A549 (cell line): ENCODE measurements at regions of chr9 and their contacts with region 1.

Region 1: GRCh38 chr9:120755827-120756434 is 37.3 kb downstream of the FBXW2 start:
- DNase-seq: peak; percentile 47 to 68
- ATAC-seq: peak; percentile 83 to 87; a peak in 5 of 6 replicates
- H3K4me3 ChIP-seq: no peak overlapping the region
- H3K27ac ChIP-seq: 0 out of 6 replicates have a peak overlapping the region, but pooled peaks of 1 of the 2 experiments have one; percentile 46
- H3K4me1 ChIP-seq: peaks cover 3% of the 10 kb centered on the region; the same call in 1 of the 3 replicates
- CTCF ChIP-seq: peak; percentile 93
- EP300 ChIP-seq: no peak
- POLR2A ChIP-seq: no peak
- RAD21 ChIP-seq: peak; percentile 92 to 96

Region 2: DNA sequence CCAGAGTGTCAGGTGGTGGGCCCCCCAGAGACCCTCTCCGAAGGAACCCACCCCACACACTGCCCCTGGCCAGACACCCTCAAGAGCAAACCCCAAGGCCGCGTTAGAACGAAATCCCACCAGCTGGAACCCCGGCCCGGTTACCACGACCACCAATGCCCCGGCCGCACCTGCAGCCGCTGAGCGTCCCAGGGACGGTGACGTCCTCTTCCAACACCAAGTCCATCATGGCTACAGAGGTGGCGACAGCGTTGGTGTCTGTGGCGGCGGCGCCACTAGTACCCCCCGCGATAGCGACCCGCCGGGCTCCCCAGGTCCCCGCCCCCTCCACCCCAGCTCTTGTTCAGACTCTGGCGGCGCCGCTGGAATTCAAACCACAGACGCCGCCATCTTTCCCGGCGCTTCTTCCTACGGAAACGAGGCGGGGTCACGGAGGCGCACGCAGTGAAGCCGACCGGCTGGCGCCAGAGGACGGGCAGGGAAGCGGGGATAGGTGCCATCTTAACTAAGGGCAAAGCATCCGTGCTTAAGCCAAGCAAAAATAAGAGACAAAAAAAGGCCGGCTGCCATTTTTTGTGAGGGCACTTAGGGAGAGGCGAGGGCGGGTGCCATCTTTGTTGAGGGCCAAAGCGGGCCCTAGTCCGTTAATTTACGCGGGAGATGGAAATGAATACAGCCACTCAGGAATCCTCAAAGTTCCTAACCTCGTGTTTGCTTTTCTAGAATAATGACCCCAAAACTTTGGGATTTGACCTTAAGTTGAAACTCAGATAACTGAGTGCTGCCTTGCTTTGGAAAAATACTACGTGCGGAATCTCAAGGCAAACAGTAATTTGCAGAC is 176.0 kb before region 1 on chr9 and contains the start of gene CDK5RAP2:
- CTCF ChIA-PET with region 1: no interaction called
- POLR2A ChIA-PET with region 1: no interaction called
- DNase-seq: peak; percentile 91 to 98
- ATAC-seq: peak; percentile 99
- H3K4me3 ChIP-seq: peak within 1 kb of the TSS; percentile 82
- H3K27ac ChIP-seq: peak within 1 kb of the TSS; percentile 87 to 94
- H3K4me1 ChIP-seq: peaks cover 18% of the 10 kb centered on the region
- CTCF ChIP-seq: no peak
- EP300 ChIP-seq: no peak
- POLR2A ChIP-seq: no peak
- RAD21 ChIP-seq: no peak
- polyA plus RNA-seq, gene CDK5RAP2: 37.1 and 44.6 TPM in 2 replicates

Region 3: DNA sequence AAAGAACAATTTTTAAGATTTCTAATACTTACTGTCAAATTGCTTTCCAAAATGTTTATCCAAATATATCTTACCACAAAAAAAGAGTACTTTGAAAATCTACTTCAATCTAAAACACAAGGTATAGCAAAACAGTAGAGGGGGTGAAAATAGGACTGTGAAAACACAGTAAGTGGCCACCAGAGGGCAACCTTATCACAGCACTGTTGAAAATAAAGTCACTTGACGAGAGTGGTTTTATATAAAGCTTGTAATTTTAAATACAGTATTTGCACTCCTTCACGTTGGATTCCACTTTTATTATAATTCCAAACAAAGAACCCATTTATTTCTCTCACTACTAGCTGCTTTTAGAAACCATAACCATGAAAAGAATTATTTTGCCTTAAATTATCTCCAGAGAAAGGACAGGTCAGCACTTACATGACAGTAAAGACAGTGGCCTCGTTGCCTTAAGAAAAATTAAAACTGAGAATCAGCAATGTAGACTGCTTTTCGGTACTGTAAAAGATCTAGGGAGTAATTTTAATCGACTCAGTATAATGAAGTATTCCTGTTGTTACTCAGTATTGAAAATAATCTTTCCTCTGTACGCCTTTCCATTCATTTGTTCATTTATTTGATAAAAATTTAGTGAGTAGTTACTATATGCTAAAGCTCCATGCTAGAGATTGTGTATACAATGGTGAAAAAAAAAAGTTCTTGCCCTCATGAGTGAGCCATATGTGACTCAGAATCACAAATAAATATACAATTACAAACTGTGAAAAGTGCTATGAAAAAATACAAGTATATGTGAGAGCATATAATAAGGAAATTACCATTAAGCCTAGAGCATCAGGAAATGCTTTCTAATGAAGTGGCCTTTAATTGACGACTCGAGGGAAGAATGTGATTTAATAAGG is 135.9 kb before region 1 on chr9:
- CTCF ChIA-PET with region 1: interaction called, 12 read pairs
- POLR2A ChIA-PET with region 1: no interaction called
- DNase-seq: peak; percentile 76 to 77
- ATAC-seq: peak; percentile 91 to 95
- H3K4me3 ChIP-seq: no peak overlapping the region
- H3K27ac ChIP-seq: peak overlapping the region; percentile 62 to 67
- H3K4me1 ChIP-seq: peaks cover 80% of the 10 kb centered on the region
- CTCF ChIP-seq: peak; percentile 96
- EP300 ChIP-seq: no peak
- POLR2A ChIP-seq: no peak
- RAD21 ChIP-seq: peak; percentile 95 to 96

Region 4: GRCh38 chr9:120663380-120663779 is 92.6 kb before region 1 on chr9:
- CTCF ChIA-PET with region 1: no interaction called
- POLR2A ChIA-PET with region 1: no interaction called
- DNase-seq: no peak
- ATAC-seq: peak in 1 of 2 experiments; percentile 28; a peak in 2 of 6 replicates
- H3K4me3 ChIP-seq: no peak overlapping the region
- H3K27ac ChIP-seq: peak overlapping the region; percentile 42 to 53; a peak in 4 of 6 replicates
- H3K4me1 ChIP-seq: peaks cover 62% of the 10 kb centered on the region
- CTCF ChIP-seq: no peak
- EP300 ChIP-seq: no peak
- POLR2A ChIP-seq: no peak
- RAD21 ChIP-seq: no peak

Region 5: GRCh38 chr9:120730661-120731514 is 25.0 kb before region 1 on chr9:
- CTCF ChIA-PET with region 1: interaction called, 20 read pairs
- POLR2A ChIA-PET with region 1: no interaction called
- DNase-seq: no peak
- ATAC-seq: peak; percentile 30 to 35; a peak in 3 of 6 replicates
- H3K4me3 ChIP-seq: no peak overlapping the region
- H3K27ac ChIP-seq: peak overlapping the region; percentile 5 to 11; a peak in 2 of 6 replicates
- H3K4me1 ChIP-seq: peaks cover 23% of the 10 kb centered on the region
- CTCF ChIP-seq: no peak
- EP300 ChIP-seq: no peak
- POLR2A ChIP-seq: no peak
- RAD21 ChIP-seq: no peak

Region 6: GRCh38 chr9:120774722-120775121 is 18.8 kb after region 1 on chr9:
- CTCF ChIA-PET with region 1: interaction called, 96 read pairs
- POLR2A ChIA-PET with region 1: no interaction called
- DNase-seq: peak; percentile 17 to 22
- ATAC-seq: peak; percentile 73 to 79; a peak in 5 of 6 replicates
- H3K4me3 ChIP-seq: no peak overlapping the region
- H3K27ac ChIP-seq: no peak overlapping the region
- H3K4me1 ChIP-seq: peaks cover 31% of the 10 kb centered on the region
- CTCF ChIP-seq: no peak
- EP300 ChIP-seq: no peak
- POLR2A ChIP-seq: no peak
- RAD21 ChIP-seq: no peak

Region 7: DNA sequence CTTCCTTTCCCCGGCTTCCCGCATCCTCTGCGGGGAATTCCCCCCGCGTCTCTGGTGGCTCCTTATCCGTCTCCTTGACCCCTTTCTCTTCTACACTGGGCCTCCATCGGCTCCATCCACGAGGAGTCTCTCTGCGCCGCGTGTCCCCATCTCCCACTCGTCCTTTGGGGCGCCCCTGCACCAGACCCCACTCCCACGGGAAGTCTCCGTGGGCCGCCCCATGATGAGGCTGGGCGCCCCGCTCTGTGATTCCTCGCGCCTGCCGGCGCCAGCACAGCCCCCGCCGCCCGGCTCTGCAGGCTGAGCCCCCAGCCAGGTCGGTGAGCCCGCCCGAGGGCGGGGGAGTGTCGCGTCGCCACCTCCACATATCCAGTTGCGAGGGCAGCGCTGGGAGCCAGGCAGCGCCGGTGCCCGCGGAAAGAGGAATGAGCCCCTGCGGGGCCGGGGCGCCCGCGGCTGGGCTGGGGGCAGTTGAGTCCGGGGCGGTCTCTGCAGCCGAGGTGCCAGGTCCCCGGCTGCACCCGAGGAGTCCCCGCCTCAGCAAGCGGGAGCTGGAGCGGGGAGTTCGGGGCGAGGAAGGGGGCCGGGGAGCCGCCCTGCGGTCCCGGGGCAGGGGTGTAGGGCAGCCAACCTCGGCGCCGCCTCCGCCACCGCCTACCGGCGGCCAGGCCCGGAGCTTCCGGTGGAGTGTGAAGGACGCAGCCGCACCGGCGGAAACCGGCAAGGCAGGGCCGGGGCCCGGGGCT is 172.7 kb after region 1 on chr9:
- CTCF ChIA-PET with region 1: interaction called, 60 read pairs
- POLR2A ChIA-PET with region 1: no interaction called
- DNase-seq: peak; percentile 57 to 78
- ATAC-seq: peak; percentile 85 to 93
- H3K4me3 ChIP-seq: peak overlapping the region; percentile 77
- H3K27ac ChIP-seq: peak overlapping the region; percentile 89 to 97
- H3K4me1 ChIP-seq: peaks cover 26% of the 10 kb centered on the region
- CTCF ChIP-seq: no peak
- EP300 ChIP-seq: no peak
- POLR2A ChIP-seq: peak; percentile 73
- RAD21 ChIP-seq: 0 out of 5 replicates have a peak, but pooled peaks of 1 of the 2 experiments have one; percentile 10

Region 8: DNA sequence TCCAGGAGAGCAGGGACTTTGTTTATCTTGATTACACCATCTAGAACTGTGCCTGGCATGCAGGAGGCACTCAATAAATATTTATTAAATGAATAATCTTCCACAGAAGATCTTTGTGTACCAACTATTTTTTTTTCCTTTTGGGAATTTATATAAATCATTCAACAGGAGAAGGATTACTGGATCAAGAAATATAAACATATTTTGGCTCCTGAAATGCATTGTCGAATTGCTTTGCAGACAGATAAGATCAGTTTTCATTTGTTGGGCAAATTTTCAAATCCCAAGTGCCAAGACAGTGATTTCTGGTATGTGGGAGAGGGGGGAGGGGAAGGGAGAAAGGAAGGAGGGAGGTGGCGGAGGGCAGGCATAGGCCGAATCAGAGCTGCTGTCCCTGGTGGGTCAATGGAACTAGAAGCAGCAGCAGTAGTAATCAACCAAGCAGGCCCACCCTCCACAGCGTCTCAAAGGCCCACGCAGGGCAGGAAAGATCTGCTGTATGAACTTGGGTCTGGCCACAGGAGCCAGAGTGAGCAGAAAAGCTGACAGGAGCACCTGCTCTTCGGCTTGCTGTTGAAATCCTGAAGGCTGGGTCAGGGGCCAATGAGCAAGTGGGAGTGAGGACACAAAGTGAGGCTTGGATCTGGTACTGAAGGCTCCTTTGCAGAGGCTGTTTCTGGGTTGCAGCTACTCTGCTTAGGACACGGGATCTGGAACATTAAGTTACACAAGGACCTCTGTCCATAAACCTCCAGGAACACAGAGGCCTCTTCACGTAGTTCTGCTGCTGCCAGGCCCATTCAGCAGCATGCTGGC is 186.5 kb after region 1 on chr9:
- CTCF ChIA-PET with region 1: interaction called, 60 read pairs
- POLR2A ChIA-PET with region 1: no interaction called
- DNase-seq: peak in 1 of 2 experiments; percentile 45
- ATAC-seq: peak; percentile 31 to 49; a peak in 3 of 6 replicates
- H3K4me3 ChIP-seq: no peak overlapping the region
- H3K27ac ChIP-seq: peak overlapping the region; percentile 65 to 77
- H3K4me1 ChIP-seq: peaks cover 42% of the 10 kb centered on the region
- CTCF ChIP-seq: no peak
- EP300 ChIP-seq: no peak
- POLR2A ChIP-seq: no peak
- RAD21 ChIP-seq: no peak